ENCODE measurements at regions of chr12 and their contacts with region 1.

Region 1: GRCh38 chr12:10331642-10332239 is 24.1 kb downstream of the KLRD1 start:
- DNase-seq: no peak
- ATAC-seq: peak in 6 of 8 donors; percentile 64 to 74 (median 70)
- H3K4me3 ChIP-seq: no peak overlapping the region
- H3K27ac ChIP-seq: no peak overlapping the region
- H3K4me1 ChIP-seq: no peaks in the 10 kb centered on the region
- H3K27me3 ChIP-seq: no peaks in the 10 kb centered on the region
- CTCF ChIP-seq: peak; percentile 33 to 84 (median 73)

Region 2: GRCh38 chr12:9951026-9951675 is 380.6 kb before region 1 on chr12:
- intact Hi-C with region 1: no loop called
- DNase-seq: no peak
- ATAC-seq: no peak
- H3K4me3 ChIP-seq: peak overlapping the region in 1 of 10 donors; percentile 5
- H3K27ac ChIP-seq: peak overlapping the region in 1 of 10 donors; percentile 56
- H3K4me1 ChIP-seq: peaks cover 0 to 32% (median 0%) of the 10 kb centered on the region in 9 donors
- H3K27me3 ChIP-seq: no peaks in the 10 kb centered on the region
- CTCF ChIP-seq: no peak

Region 3: GRCh38 chr12:10235761-10236631 is 95.7 kb before region 1 on chr12:
- intact Hi-C with region 1: loop called in 1 of 10 experiments (anchors 5 kb)
- DNase-seq: no peak
- ATAC-seq: peak in 7 of 8 donors; percentile 52 to 83 (median 82)
- H3K4me3 ChIP-seq: no peak overlapping the region
- H3K27ac ChIP-seq: no peak overlapping the region
- H3K4me1 ChIP-seq: no peaks in the 10 kb centered on the region
- H3K27me3 ChIP-seq: no peaks in the 10 kb centered on the region
- CTCF ChIP-seq: peak; percentile 77 to 93 (median 88)

Region 4: DNA sequence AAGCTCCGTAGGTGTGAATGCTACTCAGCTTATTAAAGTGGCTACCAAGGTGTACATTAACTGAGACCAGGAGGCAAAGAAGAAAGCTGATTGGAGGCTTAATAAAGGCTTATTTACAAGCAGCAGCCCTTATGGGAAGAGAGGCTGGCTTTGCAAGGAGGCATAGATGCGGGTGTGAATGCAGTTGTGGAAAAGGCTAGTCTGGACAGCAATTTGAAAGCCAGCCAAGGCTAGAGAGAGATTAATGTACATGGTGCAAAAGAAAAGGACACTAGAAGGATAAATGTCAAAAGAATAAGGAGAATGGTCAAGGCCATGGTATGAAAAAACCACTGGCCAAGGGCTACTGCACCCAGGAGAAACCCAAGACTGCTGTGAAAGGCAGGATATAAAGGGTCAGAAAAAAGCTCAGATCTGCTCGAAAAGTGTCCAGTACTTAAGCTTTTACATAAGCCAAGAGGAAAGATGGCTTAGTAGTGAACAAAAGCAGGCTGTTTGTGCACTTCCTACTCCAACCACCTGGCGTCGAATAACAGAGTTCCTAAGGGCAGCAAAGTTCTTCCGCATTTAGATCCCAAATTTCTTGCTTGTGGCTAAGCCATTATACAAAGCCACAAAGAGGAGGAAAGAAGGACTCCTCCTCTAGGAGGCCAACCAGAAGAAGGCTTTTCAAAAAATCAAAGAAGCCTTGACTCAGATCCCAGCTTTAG is 34.1 kb after region 1 on chr12:
- intact Hi-C with region 1: no loop called
- DNase-seq: no peak
- ATAC-seq: no peak
- H3K4me3 ChIP-seq: peak overlapping the region in 9 of 10 donors; percentile 44 to 96 (median 75)
- H3K27ac ChIP-seq: peak overlapping the region in 9 of 10 donors; percentile 81 to 97 (median 94)
- H3K4me1 ChIP-seq: peaks cover 0 to 55% (median 27%) of the 10 kb centered on the region in 9 donors
- H3K27me3 ChIP-seq: no peaks in the 10 kb centered on the region
- CTCF ChIP-seq: peak in 4 of 9 donors; percentile 9 to 29 (median 23)

Region 5: DNA sequence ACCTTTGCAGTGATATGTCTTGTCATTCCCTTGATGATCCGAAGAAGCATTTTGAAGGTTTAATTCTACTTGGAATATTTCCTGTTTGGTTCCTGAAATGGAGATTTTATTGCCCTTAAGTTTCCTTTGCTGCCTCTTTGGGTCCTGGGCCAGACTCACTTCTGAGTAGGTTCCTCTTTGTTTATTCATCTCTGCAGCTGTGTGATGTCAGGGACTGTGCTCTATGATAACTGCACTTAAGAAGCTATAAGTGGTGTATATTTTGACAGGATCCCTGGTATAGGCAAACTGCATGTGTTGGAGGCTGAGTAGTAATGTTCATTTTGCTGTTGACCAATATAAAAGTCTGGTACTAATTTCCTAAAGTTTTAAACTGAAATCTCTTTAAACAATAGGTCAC is 77.6 kb after region 1 on chr12 and contains the start of gene KLRC4:
- intact Hi-C with region 1: loop called in 1 of 10 experiments (anchors 5 kb)
- DNase-seq: no peak
- ATAC-seq: no peak
- H3K4me3 ChIP-seq: no peak within 1 kb of the TSS
- H3K27ac ChIP-seq: peak within 1 kb of the TSS in 1 of 10 donors; percentile 14
- H3K4me1 ChIP-seq: peaks cover 0 to 9% (median 0%) of the 10 kb centered on the region in 9 donors
- H3K27me3 ChIP-seq: peaks cover 0 to 14% (median 0%) of the 10 kb centered on the region in 7 donors
- CTCF ChIP-seq: no peak
- total RNA-seq, gene KLRC4: 0.67 to 0.90 TPM in 2 of 10 donors, not detected in the others

Region 6: DNA sequence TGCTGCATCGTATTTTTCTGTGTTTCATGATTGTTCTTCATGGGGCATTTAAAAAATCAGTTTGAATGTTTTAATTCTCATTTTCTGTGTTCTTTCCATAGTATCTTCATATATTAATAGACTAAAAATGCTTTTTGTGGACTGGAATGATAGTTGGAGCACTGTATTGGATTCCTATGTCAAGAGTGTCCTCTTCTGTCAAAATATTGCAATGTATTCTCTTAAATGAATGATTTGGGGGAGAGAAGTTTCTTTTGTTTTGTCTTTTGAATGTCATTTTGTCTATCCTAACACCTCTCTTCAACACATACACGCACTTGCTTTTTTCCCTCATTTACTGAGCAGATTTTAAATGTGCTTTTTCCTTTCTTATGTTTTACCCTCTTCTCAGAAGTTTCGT is 169.3 kb after region 1 on chr12:
- intact Hi-C with region 1: loop called in 1 of 10 experiments (anchors 5 kb)
- DNase-seq: no peak
- ATAC-seq: no peak
- H3K4me3 ChIP-seq: no peak overlapping the region
- H3K27ac ChIP-seq: no peak overlapping the region
- H3K4me1 ChIP-seq: no peaks in the 10 kb centered on the region
- H3K27me3 ChIP-seq: peaks cover 0 to 28% (median 3%) of the 10 kb centered on the region in 7 donors
- CTCF ChIP-seq: peak in 5 of 9 donors; percentile 13 to 37 (median 25)

Measured in heart right ventricle (tissue), 16 donors.